ENCODE measurements at regions of chr17 and their contacts with region 1.

Region 1: GRCh38 chr17:385926-386876 is 33.6 kb upstream of the RPH3AL start:
- DNase-seq: peak; percentile 78 to 90 (median 87)
- H3K4me3 ChIP-seq: peak overlapping the region; percentile 33
- H3K27ac ChIP-seq: peak overlapping the region; percentile 50 to 85
- H3K4me1 ChIP-seq: peaks cover 8% of the 10 kb centered on the region
- H3K27me3 ChIP-seq: no peaks in the 10 kb centered on the region
- CTCF ChIP-seq: peak; percentile 60 to 93 (median 87)
- EP300 ChIP-seq: no peak
- POLR2A ChIP-seq: no peak

Region 2: GRCh38 chr17:143782-144281 is 242.4 kb before region 1 on chr17:
- intact Hi-C with region 1: loop called in 1 of 4 experiments (anchors 5 kb)
- DNase-seq: peak; percentile 81 to 93 (median 88)
- H3K4me3 ChIP-seq: no peak overlapping the region
- H3K27ac ChIP-seq: no peak overlapping the region
- H3K4me1 ChIP-seq: peaks cover 2% of the 10 kb centered on the region
- H3K27me3 ChIP-seq: no peaks in the 10 kb centered on the region
- CTCF ChIP-seq: peak; percentile 75 to 87 (median 85)
- EP300 ChIP-seq: no peak
- POLR2A ChIP-seq: no peak

Region 3: GRCh38 chr17:164303-165235 is 221.6 kb before region 1 on chr17:
- intact Hi-C with region 1: loop called in 3 of 4 experiments (anchors 5 kb)
- DNase-seq: peak; percentile 62 to 79 (median 78)
- H3K4me3 ChIP-seq: no peak overlapping the region
- H3K27ac ChIP-seq: no peak overlapping the region
- H3K4me1 ChIP-seq: no peaks in the 10 kb centered on the region
- H3K27me3 ChIP-seq: no peaks in the 10 kb centered on the region
- CTCF ChIP-seq: peak; percentile 60 to 84 (median 74)
- EP300 ChIP-seq: no peak
- POLR2A ChIP-seq: no peak

Region 4: DNA sequence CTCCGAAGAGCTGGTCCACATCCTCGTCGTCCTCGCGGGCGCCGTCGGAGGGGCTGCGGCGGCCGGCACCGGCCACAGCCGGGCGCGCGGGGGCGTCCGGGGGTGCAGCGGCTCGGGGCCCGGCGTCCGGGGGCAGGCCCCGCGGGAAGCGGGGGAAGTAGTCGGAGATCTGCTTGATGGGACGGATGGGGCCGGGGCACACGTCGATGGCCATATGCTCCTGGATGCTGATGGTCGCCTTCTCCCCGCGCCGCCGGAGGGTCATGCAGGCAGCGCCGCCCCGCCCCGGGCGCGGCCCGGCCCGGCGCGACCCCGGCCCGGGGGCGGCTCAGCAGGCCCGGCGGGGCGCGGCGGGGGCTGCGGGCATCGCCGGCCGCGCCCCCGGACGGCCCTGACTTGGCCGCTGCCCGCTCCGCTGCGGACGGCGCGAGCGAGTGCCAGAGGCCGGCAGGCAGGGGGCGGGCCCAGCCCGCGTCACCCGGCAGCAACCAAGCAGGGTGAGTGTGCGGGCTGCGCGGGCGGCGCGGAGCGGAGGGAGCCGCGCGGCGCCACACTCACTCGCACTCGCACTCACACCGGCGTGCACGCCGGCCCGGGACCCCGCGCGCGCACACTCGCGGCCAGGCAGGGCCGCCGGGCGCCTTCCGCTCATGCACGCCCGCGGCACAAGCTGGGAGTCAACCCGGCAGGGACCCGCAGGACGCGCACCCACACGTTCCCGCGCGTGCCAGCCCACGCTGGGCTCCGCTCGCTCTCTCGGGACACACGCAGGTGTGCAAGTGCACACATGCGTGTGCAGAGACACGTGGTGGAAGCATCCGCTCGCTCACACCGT is 204.8 kb before region 1 on chr17 and contains the start of gene DOC2B:
- intact Hi-C with region 1: loop called in 1 of 4 experiments (anchors 5 kb)
- DNase-seq: peak in 3 of 5 donors; percentile 42 to 70 (median 66)
- H3K4me3 ChIP-seq: peak within 1 kb of the TSS; percentile 17
- H3K27ac ChIP-seq: no peak within 1 kb of the TSS
- H3K4me1 ChIP-seq: peaks cover 2% of the 10 kb centered on the region
- H3K27me3 ChIP-seq: peaks cover 5% of the 10 kb centered on the region
- CTCF ChIP-seq: no peak
- EP300 ChIP-seq: no peak
- POLR2A ChIP-seq: no peak
- total RNA-seq, gene DOC2B: 0.83 to 4.5 (median 2.0) TPM

Region 5: GRCh38 chr17:333626-334396 is 52.4 kb before region 1 on chr17:
- intact Hi-C with region 1: loop called in 2 of 4 experiments (anchors 10 kb)
- DNase-seq: peak; percentile 95 to 97 (median 96)
- H3K4me3 ChIP-seq: peak overlapping the region; percentile 18
- H3K27ac ChIP-seq: peak overlapping the region in 1 of 2 donors; percentile 93
- H3K4me1 ChIP-seq: peaks cover 27% of the 10 kb centered on the region
- H3K27me3 ChIP-seq: no peaks in the 10 kb centered on the region
- CTCF ChIP-seq: peak in 1 of 3 donors; percentile 24
- EP300 ChIP-seq: no peak
- POLR2A ChIP-seq: peak; percentile 50

Measured in ovary (tissue), 10 donors.